ENCODE measurements at regions of chr11 and their contacts with region 1.

Region 1: GRCh38 chr11:122628810-122629555 is 26.5 kb upstream of the UBASH3B start:
- DNase-seq: peak; percentile 65
- H3K4me3 ChIP-seq: no peak overlapping the region
- H3K27ac ChIP-seq: no peak overlapping the region
- H3K4me1 ChIP-seq: peaks cover 24% of the 10 kb centered on the region
- H3K27me3 ChIP-seq: no peaks in the 10 kb centered on the region
- CTCF ChIP-seq: peak; percentile 84 to 95

Region 2: GRCh38 chr11:122578168-122578825 is 50.7 kb before region 1 on chr11:
- CTCF ChIA-PET with region 1: no interaction called
- dilution Hi-C with region 1: no loop called
- in situ Hi-C with region 1: no loop called
- intact Hi-C with region 1: loop called (anchors 1 kb)
- DNase-seq: no peak
- H3K4me3 ChIP-seq: no peak overlapping the region
- H3K27ac ChIP-seq: no peak overlapping the region
- H3K4me1 ChIP-seq: peaks cover 10% of the 10 kb centered on the region
- H3K27me3 ChIP-seq: no peaks in the 10 kb centered on the region
- CTCF ChIP-seq: no peak

Region 3: DNA sequence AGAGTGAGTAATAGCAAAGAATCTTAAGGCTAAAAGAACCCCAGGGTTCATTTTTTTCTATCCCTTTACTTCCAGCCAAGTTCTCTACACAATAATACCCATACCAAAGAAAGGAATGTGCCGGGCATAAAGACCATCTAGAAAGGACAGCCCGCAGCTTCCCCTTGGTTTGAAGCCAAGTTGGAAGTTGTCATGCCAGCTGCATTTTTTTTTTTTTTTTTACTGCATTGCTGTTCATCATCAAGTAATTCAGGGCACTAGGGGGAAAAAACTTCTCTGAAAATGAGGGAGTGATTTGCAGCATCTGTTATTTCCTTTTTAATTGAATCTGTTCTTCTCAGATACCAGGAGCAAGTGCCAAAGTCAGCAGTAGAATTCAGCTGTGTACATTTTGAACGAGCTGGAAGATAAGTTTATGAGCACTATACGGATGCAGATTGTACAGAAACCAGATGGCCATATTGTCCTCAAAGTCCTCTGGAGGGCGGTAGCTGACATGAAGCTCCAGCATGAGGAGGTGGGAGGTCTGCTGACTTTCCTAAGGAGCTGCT is 82.9 kb after region 1 on chr11:
- CTCF ChIA-PET with region 1: no interaction called
- dilution Hi-C with region 1: no loop called
- in situ Hi-C with region 1: no loop called
- intact Hi-C with region 1: loop called (anchors 2 kb)
- DNase-seq: peak; percentile 53
- H3K4me3 ChIP-seq: no peak overlapping the region
- H3K27ac ChIP-seq: no peak overlapping the region
- H3K4me1 ChIP-seq: peaks cover 50% of the 10 kb centered on the region
- H3K27me3 ChIP-seq: no peaks in the 10 kb centered on the region
- CTCF ChIP-seq: no peak

Region 4: GRCh38 chr11:122754553-122755322 is 125.8 kb after region 1 on chr11:
- CTCF ChIA-PET with region 1: interaction called, 5 read pairs
- dilution Hi-C with region 1: no loop called
- in situ Hi-C with region 1: no loop called
- intact Hi-C with region 1: loop called (anchors 1 kb)
- DNase-seq: no peak
- H3K4me3 ChIP-seq: no peak overlapping the region
- H3K27ac ChIP-seq: no peak overlapping the region
- H3K4me1 ChIP-seq: peaks cover 14% of the 10 kb centered on the region
- H3K27me3 ChIP-seq: no peaks in the 10 kb centered on the region
- CTCF ChIP-seq: peak; percentile 5 to 20

Region 5: DNA sequence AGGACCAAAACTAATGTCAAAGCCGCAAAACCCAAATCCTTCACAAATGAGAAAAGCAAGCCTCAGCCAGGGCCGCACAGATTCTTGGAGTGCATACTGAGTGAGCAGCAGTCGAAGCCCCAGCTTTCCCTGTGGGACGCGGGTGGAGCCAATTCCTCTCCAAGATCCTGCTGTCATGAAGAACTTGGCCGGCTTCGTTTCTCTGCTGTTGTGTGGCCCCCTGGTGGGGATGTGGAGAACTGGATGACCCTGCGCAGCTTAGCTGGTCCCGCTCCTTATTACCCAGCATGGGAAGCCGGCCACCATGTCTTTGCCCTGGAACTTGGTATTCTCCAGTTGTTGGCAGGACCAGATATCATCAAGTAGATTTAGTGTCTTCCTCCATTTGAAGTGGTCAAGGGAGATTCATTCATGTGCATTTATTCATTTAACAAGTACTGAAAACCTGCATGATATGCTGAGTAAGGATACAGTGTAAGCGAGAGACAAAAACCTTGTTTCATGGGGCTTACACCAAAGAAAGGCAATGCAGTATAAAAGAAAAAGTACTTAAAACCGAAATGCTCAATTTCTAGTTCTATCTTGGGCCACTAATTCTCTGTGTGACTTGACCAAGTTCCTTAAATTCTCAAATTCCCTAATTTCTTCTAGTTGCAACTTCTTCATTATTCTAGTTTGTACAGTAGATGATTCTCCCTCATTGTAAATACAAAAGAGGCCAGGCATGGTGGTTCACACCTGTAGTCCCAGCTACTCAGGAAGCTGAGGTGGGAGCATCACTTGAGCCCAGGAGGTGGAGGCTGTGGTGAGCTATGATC is 152.6 kb after region 1 on chr11:
- CTCF ChIA-PET with region 1: interaction called, 4 read pairs
- dilution Hi-C with region 1: no loop called
- in situ Hi-C with region 1: loop called (anchors 5 kb)
- intact Hi-C with region 1: loop called (anchors 1 kb)
- DNase-seq: peak; percentile 73
- H3K4me3 ChIP-seq: no peak overlapping the region
- H3K27ac ChIP-seq: peak overlapping the region; percentile 11
- H3K4me1 ChIP-seq: peaks cover 25% of the 10 kb centered on the region
- H3K27me3 ChIP-seq: no peaks in the 10 kb centered on the region
- CTCF ChIP-seq: peak; percentile 92 to 95

Region 6: GRCh38 chr11:122803306-122803705 is 174.3 kb after region 1 on chr11:
- CTCF ChIA-PET with region 1: interaction called, 5 read pairs
- dilution Hi-C with region 1: no loop called
- in situ Hi-C with region 1: no loop called
- intact Hi-C with region 1: loop called (anchors 1 kb)
- DNase-seq: peak; percentile 100
- H3K4me3 ChIP-seq: no peak overlapping the region
- H3K27ac ChIP-seq: peak overlapping the region; percentile 100
- H3K4me1 ChIP-seq: peaks cover 56% of the 10 kb centered on the region
- H3K27me3 ChIP-seq: no peaks in the 10 kb centered on the region
- CTCF ChIP-seq: no peak

Region 7: DNA sequence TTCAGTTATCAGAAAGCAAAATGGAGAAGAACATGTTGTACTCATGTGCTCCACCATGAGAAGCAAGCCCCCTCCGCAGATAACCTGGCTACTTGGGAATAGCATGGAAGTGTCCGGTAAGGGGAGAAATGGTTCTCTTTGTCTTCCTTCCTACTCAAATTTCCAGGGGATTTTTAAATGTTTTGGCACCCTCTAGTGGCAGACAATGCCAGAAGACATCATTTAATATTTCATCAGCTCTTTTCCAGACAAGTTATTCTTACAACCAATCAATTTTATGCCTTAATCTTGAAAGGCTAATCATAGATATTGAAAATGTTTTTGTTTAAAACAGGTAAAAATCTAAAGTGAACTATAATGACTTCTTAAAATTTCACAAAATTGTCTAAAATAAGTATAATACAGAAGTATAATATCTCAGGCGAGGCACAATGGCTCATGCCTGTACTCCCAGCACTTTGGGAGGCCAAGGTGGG is 225.0 kb after region 1 on chr11:
- CTCF ChIA-PET with region 1: interaction called, 4 read pairs
- dilution Hi-C with region 1: loop called (anchors 5 kb)
- in situ Hi-C with region 1: loop called (anchors 5 to 10 kb)
- intact Hi-C with region 1: loop called (anchors 1 kb)
- DNase-seq: peak; percentile 72
- H3K4me3 ChIP-seq: no peak overlapping the region
- H3K27ac ChIP-seq: no peak overlapping the region
- H3K4me1 ChIP-seq: peaks cover 35% of the 10 kb centered on the region
- H3K27me3 ChIP-seq: no peaks in the 10 kb centered on the region
- CTCF ChIP-seq: peak; percentile 63 to 67